Heart left ventricle (tissue), 16 donors: ENCODE measurements at regions of chr16 and their contacts with region 1.

Region 1: DNA sequence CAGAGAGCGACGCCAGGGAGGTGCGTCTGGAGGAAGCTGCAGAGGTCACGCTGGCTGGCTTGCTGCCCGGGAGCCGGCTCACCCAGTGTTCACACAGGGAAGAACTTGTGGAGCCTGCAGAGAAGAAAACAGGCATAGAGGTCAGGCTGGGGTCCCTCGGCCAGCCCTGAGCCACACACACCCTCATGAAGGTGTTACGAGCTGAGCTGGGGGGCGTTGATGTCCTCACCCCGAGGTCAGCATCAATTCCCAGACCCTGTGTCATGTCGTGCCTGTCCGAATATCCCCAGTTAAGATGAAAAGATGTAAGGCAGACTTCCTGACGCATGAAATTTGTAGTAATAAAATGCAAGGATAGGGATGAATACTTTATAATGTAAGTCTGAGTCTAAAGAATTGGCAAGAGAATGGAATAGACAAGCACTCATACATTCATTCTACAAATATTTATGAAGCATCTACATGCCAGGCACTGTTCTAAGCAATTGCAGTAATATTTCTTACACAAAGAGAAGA is 77.1 kb downstream of the USP31 start:
- DNase-seq: peak; percentile 85 to 94 (median 91)
- ATAC-seq: peak; percentile 74 to 90 (median 84)
- H3K4me3 ChIP-seq: peak overlapping the region in 1 of 12 donors; percentile 10
- H3K27ac ChIP-seq: peak overlapping the region; percentile 35 to 92 (median 84)
- H3K4me1 ChIP-seq: peaks cover 0 to 54% (median 34%) of the 10 kb centered on the region in 12 donors
- H3K27me3 ChIP-seq: no peaks in the 10 kb centered on the region
- CTCF ChIP-seq: no peak
- POLR2A ChIP-seq: no peak

Region 2: GRCh38 chr16:23026784-23027362 is 45.3 kb before region 1 on chr16:
- intact Hi-C with region 1: no loop called
- DNase-seq: no peak
- ATAC-seq: no peak
- H3K4me3 ChIP-seq: no peak overlapping the region
- H3K27ac ChIP-seq: no peak overlapping the region
- H3K4me1 ChIP-seq: no peaks in the 10 kb centered on the region
- H3K27me3 ChIP-seq: peaks cover 0 to 17% (median 0%) of the 10 kb centered on the region in 9 donors
- CTCF ChIP-seq: no peak
- POLR2A ChIP-seq: no peak

Region 3: GRCh38 chr16:23088018-23088417 is 15.9 kb after region 1 on chr16:
- intact Hi-C with region 1: loop called in 1 of 10 experiments (anchors 2 kb)
- DNase-seq: peak in 3 of 5 donors; percentile 33 to 65 (median 63)
- ATAC-seq: peak; percentile 92 to 95 (median 94)
- H3K4me3 ChIP-seq: no peak overlapping the region
- H3K27ac ChIP-seq: peak overlapping the region in 6 of 12 donors; percentile 6 to 69 (median 50)
- H3K4me1 ChIP-seq: peaks cover 0 to 30% (median 5%) of the 10 kb centered on the region in 12 donors
- H3K27me3 ChIP-seq: no peaks in the 10 kb centered on the region
- CTCF ChIP-seq: no peak
- POLR2A ChIP-seq: no peak

Region 4: DNA sequence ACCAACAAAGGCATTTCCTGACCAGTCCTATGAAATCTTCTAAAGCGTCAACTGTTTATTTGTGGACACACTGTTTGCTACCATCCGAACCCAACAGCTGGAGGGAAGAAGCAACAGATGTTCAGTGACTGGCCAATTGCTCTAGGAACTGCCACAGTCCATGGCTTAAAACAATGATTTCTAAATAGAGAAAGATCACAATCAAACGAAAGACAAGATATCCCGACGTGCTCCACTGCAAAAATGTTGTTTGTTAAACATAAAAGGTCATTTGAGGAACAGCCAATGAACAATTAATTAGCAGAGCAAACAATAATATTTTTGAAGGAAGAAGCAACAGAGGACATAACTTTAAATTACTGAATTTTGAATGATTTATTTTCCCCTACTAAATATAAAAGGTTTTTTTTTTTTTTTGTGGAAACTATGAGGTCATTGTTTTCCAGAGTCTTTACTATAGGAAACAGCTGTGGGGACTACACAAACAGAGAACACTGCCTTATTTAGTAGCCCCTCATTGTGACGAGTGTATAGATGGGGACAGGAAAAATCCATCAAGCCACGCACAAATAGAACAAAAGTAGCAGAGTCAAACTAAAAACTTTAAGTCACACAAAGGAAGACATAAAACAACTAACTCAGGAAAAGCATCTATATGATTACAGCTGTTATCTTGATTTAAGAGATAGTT is 59.9 kb after region 1 on chr16:
- intact Hi-C with region 1: loop called in 3 of 10 experiments (anchors 5 kb)
- DNase-seq: no peak
- ATAC-seq: peak in 3 of 4 donors; percentile 39 to 83 (median 50)
- H3K4me3 ChIP-seq: peak overlapping the region in 10 of 12 donors; percentile 16 to 47 (median 29)
- H3K27ac ChIP-seq: peak overlapping the region; percentile 60 to 90 (median 88)
- H3K4me1 ChIP-seq: peaks cover 10 to 62% (median 45%) of the 10 kb centered on the region in 12 donors
- H3K27me3 ChIP-seq: no peaks in the 10 kb centered on the region
- CTCF ChIP-seq: no peak
- POLR2A ChIP-seq: no peak

Region 5: DNA sequence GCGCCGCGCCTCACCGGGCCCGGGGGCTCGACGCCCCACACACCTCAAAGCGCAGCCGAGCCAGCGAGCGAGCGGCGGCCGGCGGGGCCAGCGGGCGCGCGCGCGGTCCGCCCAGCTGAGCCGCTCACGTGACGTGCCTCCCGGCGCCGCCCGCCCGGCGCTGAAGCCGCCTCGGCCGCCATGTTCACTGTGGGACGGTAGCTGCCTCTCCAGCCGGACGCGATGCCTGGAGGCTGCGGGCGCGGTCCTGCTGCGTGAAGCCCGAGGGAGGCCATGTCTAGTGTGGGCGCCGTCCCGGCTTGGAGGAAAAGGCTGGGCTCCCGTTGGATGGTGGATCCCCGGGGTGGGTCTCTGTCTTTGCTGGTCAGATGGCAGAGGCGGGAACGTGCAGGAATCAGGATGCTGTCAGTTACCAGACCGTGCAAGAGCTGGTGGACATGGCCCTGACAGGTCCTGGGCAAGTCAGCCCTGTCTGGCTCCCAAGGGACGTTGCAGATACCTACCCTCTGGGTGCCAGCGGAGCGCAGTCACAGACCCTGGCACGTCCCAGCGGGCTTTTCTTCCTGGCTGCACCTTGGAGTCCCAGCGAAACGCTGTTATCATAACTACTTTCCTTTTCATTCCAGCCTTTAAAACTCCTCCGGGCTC is 77.3 kb after region 1 on chr16 and contains the start of gene USP31:
- intact Hi-C with region 1: loop called in 8 of 10 experiments (anchors 2 to 5 kb)
- DNase-seq: peak; percentile 97 to 98 (median 98)
- ATAC-seq: peak; percentile 98 to 99 (median 98)
- H3K4me3 ChIP-seq: peak within 1 kb of the TSS; percentile 65 to 95 (median 80)
- H3K27ac ChIP-seq: peak within 1 kb of the TSS; percentile 72 to 94 (median 83)
- H3K4me1 ChIP-seq: peaks cover 4 to 49% (median 34%) of the 10 kb centered on the region in 12 donors
- H3K27me3 ChIP-seq: no peaks in the 10 kb centered on the region
- CTCF ChIP-seq: no peak
- POLR2A ChIP-seq: no peak
- total RNA-seq, gene USP31: 19.1 to 49.9 (median 23.8) TPM

Region 6: DNA sequence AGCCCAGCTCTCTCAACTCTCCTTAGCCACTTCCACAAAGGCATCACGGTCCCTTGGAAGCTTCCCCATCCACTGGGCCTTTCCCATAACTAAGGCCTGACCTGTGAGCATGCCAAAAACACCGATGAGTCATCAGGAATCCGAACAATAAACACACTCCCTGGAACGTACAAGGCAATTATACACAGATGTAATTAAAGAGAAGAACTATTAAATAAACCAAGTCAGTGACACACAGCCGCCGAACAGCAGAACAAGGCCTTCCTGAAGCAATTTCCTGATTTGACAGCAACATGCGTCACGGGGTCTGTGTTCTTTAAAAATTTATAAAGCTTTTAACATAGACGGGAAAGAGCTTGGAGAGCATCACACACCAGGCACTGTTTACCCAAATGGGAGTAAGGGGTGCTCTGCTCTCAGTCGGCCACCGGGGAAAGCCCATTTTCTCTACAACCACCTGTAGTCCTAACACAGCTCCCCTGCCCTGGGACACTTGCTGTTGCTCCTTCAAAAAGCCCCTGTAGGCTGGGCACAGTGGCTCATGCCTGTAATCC is 351.4 kb after region 1 on chr16:
- intact Hi-C with region 1: loop called in 1 of 10 experiments (anchors 10 kb)
- DNase-seq: peak in 4 of 5 donors; percentile 72 to 80 (median 76)
- ATAC-seq: peak; percentile 94 to 98 (median 96)
- H3K4me3 ChIP-seq: no peak overlapping the region
- H3K27ac ChIP-seq: peak overlapping the region; percentile 71 to 93 (median 79)
- H3K4me1 ChIP-seq: peaks cover 0 to 13% (median 5%) of the 10 kb centered on the region in 12 donors
- H3K27me3 ChIP-seq: no peaks in the 10 kb centered on the region
- CTCF ChIP-seq: no peak
- POLR2A ChIP-seq: no peak

Region 7: DNA sequence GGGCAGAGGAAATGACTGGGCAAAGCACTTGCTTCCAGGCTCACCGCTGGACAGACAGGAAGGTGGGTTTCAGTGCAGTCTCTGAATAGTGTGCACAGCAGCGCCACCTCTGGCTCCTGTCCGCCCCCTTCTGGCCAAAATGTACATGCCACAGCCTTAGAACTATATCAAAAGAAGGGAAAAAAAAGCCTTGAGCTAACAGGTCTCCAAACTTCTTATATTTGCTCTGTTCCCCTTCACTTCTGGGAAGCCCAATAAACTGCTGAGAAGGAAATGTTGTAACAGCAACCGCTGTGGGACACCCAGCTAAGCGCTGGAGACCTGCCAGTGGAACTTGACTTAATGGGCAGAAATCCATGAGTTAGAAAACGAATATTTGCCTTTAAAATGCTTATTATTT is 363.4 kb after region 1 on chr16:
- intact Hi-C with region 1: loop called in 4 of 10 experiments (anchors 10 kb)
- DNase-seq: peak in 4 of 5 donors; percentile 21 to 71 (median 36)
- ATAC-seq: peak; percentile 58 to 82 (median 76)
- H3K4me3 ChIP-seq: no peak overlapping the region
- H3K27ac ChIP-seq: peak overlapping the region in 1 of 12 donors; percentile 33
- H3K4me1 ChIP-seq: peaks cover 0 to 12% (median 0%) of the 10 kb centered on the region in 12 donors
- H3K27me3 ChIP-seq: no peaks in the 10 kb centered on the region
- CTCF ChIP-seq: peak; percentile 49 to 88 (median 74)
- POLR2A ChIP-seq: no peak